ENCODE measurements at regions of chr1 and their contacts with region 1.

Region 1: DNA sequence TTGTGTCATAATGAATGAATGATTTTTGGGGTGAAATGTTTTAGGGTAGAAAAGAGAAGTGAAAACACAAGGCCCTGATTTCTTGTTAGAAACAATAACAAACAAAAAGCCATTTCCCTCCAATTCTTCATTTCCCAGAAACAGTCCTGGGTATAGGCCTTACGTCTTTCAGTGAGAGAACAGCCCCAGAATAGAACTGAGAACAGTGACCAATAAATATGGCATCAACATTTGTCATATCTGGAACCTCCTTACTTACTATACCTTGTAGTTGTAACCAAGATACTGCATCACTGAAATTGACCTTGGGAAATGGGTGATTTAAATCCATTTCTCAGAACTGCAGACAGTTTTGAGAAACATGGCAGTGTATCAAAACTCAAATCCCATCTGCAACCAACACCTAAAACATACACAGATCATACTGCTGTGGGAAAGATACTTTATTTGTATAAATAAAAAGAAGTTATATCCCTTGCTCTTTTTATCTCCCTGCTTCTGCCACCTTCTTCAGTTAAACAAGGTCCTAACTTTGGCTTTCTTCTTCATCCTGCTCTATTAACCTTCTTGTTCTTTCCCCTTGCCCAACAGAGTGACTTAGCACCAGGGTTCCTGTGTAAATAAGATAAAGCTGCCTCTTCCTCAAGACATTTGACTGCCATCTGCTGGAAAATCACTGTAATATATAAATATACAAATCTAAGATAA is 19.5 kb downstream of the XKR8 start:
- DNase-seq: no peak
- ATAC-seq: peak; percentile 74 to 94 (median 88)
- H3K4me3 ChIP-seq: no peak overlapping the region
- H3K27ac ChIP-seq: no peak overlapping the region
- H3K4me1 ChIP-seq: no peaks in the 10 kb centered on the region
- H3K27me3 ChIP-seq: no peaks in the 10 kb centered on the region
- CTCF ChIP-seq: peak in 2 of 4 donors; percentile 15 to 18

Region 2: DNA sequence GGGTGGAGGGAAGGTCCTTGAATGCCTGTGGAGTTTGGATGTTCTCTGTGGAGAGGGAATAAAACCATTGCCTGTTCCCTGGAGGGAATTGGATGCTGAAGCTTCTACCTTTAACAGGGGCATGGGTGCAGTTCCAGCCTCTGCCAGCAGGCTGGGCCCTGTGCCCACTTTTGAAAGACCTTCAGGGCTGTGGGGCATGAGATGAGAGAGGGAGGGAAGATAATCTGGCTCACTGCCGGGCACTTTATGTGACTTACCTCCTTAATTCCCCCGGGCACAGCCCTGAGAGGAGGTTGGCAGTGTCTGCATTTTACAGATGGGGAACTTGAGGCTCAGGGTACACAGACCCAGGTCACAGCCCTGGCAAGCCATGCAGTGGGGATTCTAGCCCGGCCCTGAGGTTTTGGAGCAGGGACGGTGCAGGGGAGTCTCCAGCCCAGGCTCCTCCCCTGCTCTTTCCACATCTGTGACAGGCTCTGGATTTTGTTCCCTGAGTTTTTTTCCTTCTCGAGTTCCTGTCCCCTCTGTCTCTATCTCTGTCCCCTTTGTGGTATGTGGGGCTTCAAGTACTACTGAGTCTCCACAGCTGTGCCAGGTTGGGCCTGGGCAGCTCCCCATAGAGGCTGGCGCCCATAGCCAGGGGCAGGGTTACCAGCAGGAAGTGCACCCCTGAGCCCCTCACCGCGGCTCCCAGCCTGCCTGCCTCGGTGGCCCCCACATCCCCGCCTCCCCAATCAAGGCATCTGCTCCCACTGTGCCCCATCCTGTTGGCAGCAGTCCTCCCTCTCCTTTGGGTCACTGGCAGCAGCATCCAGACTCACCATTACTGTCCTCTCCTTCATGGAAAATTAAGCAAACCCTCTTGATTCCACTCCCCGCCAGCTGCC is 121.0 kb before region 1 on chr1:
- intact Hi-C with region 1: loop called in 1 of 3 experiments (anchors 5 kb)
- DNase-seq: peak; percentile 63 to 93 (median 85)
- ATAC-seq: peak; percentile 88 to 96 (median 95)
- H3K4me3 ChIP-seq: no peak overlapping the region
- H3K27ac ChIP-seq: no peak overlapping the region
- H3K4me1 ChIP-seq: no peaks in the 10 kb centered on the region
- H3K27me3 ChIP-seq: no peaks in the 10 kb centered on the region
- CTCF ChIP-seq: peak; percentile 90 to 96 (median 90)

Measured in pancreas (tissue), 10 donors.